Dendritic cell treated with granulocyte-macrophage colony-stimulating factor and Interleukin-4, amounts not matched to agents 40 ng/mL and 50 ng/mL, for 4 days (primary cell): ENCODE measurements at regions of chr12 and their contacts with region 1.

Region 1: DNA sequence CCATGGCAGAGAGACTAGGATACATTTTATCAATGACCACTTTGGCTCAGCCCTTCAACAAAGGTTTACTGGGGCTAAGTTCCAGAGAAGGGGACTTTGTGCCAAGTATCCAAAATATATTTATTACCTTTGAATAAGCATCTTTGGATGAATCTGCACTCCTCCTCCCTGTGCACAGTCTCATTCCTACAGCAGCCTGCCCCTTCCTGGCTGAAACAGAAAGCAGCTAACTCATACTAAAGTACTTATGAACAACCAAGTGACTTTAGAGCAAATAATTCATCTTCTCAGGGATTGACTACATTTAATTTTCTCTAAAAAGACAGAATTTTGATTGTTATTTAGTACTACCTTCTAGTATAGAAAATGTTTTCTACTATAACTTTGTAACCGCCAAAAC is 47.8 kb upstream of the ETV6 start:
- H3K4me3 Mint-ChIP-seq: no peak overlapping the region
- H3K27ac Mint-ChIP-seq: no peak overlapping the region
- H3K4me1 Mint-ChIP-seq: peaks cover 28% of the 10 kb centered on the region
- H3K27me3 Mint-ChIP-seq: no peaks in the 10 kb centered on the region

Region 2: GRCh38 chr12:11638315-11638916 is 36.8 kb after region 1 on chr12:
- intact Hi-C with region 1: loop called (anchors 5 kb)
- H3K4me3 Mint-ChIP-seq: no peak overlapping the region
- H3K27ac Mint-ChIP-seq: no peak overlapping the region
- H3K4me1 Mint-ChIP-seq: peaks cover 21% of the 10 kb centered on the region
- H3K27me3 Mint-ChIP-seq: no peaks in the 10 kb centered on the region